ENCODE measurements at regions of chr2 and their contacts with region 1.

Region 1: DNA sequence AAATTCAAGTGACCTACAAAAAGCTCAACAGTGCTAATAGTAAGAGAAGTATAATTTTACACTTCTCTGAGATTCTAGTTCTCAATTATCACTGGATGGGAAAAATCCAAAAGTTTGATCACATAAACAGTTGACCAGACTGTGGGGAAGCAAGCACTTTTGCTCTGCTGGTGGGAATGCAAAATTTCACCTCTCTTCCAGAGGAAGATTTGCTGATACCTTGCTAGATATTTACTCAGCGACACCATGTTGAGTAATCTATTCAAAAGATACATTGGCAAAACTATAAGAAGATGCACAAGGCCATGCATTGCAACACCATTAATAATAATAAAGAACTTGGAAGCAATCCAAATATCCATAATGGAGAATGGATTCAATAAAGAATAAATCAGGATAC is 204.4 kb downstream of the MREG start:
- DNase-seq: no peak
- ATAC-seq: no peak
- H3K4me3 ChIP-seq: no peak overlapping the region
- H3K27ac ChIP-seq: no peak overlapping the region
- H3K4me1 ChIP-seq: peaks cover 4% of the 10 kb centered on the region; the same call in 1 of the 2 replicates
- H3K27me3 ChIP-seq: no peaks in the 10 kb centered on the region
- CTCF ChIP-seq: 0 out of 2 replicates have a peak, but pooled peaks have one; percentile 22
- POLR2A ChIP-seq: no peak
- RAD21 ChIP-seq: no peak

Region 2: GRCh38 chr2:215556979-215557378 is 252.0 kb before region 1 on chr2:
- CTCF ChIA-PET with region 1: no interaction called
- POLR2A ChIA-PET with region 1: no interaction called
- dilution Hi-C with region 1: no loop called
- in situ Hi-C with region 1: no loop called
- intact Hi-C with region 1: no loop called
- DNase-seq: peak; percentile 51
- ATAC-seq: no peak
- H3K4me3 ChIP-seq: no peak overlapping the region
- H3K27ac ChIP-seq: no peak overlapping the region
- H3K4me1 ChIP-seq: peaks cover 13% of the 10 kb centered on the region; the same call in 1 of the 2 replicates
- H3K27me3 ChIP-seq: no peaks in the 10 kb centered on the region
- CTCF ChIP-seq: no peak
- POLR2A ChIP-seq: no peak
- RAD21 ChIP-seq: no peak

Region 3: GRCh38 chr2:215878482-215879055 is 69.6 kb after region 1 on chr2:
- CTCF ChIA-PET with region 1: no interaction called
- POLR2A ChIA-PET with region 1: interaction called, 12 read pairs
- dilution Hi-C with region 1: no loop called
- in situ Hi-C with region 1: no loop called
- intact Hi-C with region 1: no loop called
- DNase-seq: peak; percentile 55
- ATAC-seq: peak; percentile 12; the same call in 1 of the 2 replicates
- H3K4me3 ChIP-seq: no peak overlapping the region
- H3K27ac ChIP-seq: no peak overlapping the region
- H3K4me1 ChIP-seq: peaks cover 11% of the 10 kb centered on the region
- H3K27me3 ChIP-seq: no peaks in the 10 kb centered on the region
- CTCF ChIP-seq: no peak
- POLR2A ChIP-seq: no peak
- RAD21 ChIP-seq: no peak